ENCODE measurements at regions of chr1 and their contacts with region 1.

Region 1: DNA sequence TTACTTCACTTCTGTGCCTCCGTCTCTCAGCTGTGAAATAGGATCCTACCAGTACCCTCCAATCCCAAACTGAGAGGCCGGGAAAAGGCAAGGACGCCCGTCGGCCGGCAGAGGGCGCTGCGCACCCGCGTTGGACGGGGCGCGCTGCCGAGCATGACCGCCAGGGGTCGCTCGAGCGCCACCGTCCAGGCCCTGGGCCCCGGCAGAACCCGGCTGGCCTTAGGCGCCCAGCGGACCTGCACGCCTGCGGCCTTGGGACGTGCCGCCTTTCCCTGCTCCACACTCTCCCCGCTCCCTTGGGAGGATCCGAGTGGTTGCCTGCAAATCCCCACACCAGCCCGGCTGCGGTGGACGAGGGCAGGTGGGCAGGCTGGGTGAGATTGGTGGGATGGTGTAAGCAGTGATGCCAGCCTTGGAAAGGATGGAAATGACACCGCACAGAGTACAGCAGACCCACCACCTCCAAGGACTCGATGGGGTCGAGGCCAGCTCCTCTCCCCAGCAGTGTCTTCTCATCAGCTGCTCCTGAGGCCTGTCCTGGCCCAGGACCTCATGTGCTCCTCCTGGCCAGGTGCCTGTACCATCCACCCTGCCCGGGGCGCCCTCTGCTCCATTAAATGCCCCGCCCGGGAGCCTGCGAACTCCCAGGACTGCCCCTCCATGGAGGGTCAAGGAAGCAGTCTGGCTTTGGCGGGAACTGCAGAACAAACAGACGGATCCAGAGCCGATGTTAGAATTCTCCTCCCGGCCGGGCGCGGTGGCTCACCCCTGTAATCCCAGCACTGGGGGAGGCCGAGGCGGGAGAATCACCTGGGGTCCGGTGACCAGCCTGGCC is 47.4 kb upstream of the LBR start:
- DNase-seq: peak; percentile 77
- H3K4me3 Mint-ChIP-seq: no peak overlapping the region
- H3K27ac Mint-ChIP-seq: no peak overlapping the region
- H3K4me1 Mint-ChIP-seq: peaks cover 41% of the 10 kb centered on the region
- H3K27me3 Mint-ChIP-seq: no peaks in the 10 kb centered on the region

Region 2: DNA sequence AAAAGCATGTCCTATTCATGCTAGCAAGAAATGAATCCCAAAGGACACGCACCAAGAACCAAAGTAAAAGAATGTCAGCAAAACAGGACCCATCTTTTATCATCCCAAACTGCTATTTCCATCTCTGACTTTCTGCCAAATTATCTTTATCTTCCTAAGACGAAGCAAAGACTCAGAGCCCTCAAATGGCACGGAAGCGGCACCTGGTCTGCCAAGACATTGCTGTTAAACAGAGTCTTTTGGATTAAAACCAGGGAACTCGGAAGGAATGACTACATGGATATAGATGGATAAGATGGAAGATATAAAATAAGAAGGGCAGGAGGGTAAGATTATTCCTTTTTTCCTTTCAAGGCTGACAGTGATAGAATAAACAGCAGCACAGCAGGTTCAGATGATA is 13.5 kb after region 1 on chr1:
- CTCF ChIA-PET with region 1: interaction called, 14 read pairs
- POLR2A ChIA-PET with region 1: no interaction called
- intact Hi-C with region 1: no loop called
- DNase-seq: no peak
- H3K4me3 Mint-ChIP-seq: no peak overlapping the region
- H3K27ac Mint-ChIP-seq: no peak overlapping the region
- H3K4me1 Mint-ChIP-seq: no peaks in the 10 kb centered on the region
- H3K27me3 Mint-ChIP-seq: peaks cover 5% of the 10 kb centered on the region

Region 3: DNA sequence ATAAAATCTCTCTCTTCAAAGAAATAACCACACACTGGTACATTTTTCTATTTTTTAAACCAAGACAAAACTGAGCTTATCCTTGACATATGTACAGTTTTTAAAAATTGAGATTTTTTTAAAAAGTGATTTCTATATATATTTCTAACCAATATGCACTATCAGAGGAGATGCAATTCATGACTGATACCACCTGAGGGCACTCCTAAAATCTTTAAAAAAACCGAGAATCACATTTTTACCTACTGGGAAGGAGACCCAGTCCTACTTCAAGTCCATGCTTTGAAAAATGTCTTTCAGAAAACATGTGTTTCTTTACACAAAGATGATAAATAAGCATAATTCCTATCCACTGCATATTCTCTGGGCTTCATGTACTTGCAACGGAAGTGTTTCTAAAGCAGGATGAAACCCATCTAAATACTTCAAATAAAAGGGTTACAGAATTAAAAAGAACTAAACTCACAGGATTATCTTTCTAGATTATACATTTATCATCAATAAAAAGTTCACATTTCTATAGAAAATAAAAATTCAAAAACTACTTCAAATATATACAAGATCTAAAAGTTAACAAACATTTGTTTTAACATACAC is 79.1 kb after region 1 on chr1:
- CTCF ChIA-PET with region 1: interaction called, 11 read pairs
- POLR2A ChIA-PET with region 1: no interaction called
- intact Hi-C with region 1: loop called (anchors 5 kb)
- DNase-seq: no peak
- H3K4me3 Mint-ChIP-seq: no peak overlapping the region
- H3K27ac Mint-ChIP-seq: no peak overlapping the region
- H3K4me1 Mint-ChIP-seq: no peaks in the 10 kb centered on the region
- H3K27me3 Mint-ChIP-seq: peaks cover 3% of the 10 kb centered on the region

Region 4: GRCh38 chr1:225911191-225912130 is 436.3 kb after region 1 on chr1:
- CTCF ChIA-PET with region 1: interaction called, 14 read pairs
- POLR2A ChIA-PET with region 1: no interaction called
- intact Hi-C with region 1: loop called (anchors 1 kb)
- DNase-seq: peak; percentile 80
- H3K4me3 Mint-ChIP-seq: no peak overlapping the region
- H3K27ac Mint-ChIP-seq: no peak overlapping the region
- H3K4me1 Mint-ChIP-seq: peaks cover 20% of the 10 kb centered on the region
- H3K27me3 Mint-ChIP-seq: no peaks in the 10 kb centered on the region

Region 5: DNA sequence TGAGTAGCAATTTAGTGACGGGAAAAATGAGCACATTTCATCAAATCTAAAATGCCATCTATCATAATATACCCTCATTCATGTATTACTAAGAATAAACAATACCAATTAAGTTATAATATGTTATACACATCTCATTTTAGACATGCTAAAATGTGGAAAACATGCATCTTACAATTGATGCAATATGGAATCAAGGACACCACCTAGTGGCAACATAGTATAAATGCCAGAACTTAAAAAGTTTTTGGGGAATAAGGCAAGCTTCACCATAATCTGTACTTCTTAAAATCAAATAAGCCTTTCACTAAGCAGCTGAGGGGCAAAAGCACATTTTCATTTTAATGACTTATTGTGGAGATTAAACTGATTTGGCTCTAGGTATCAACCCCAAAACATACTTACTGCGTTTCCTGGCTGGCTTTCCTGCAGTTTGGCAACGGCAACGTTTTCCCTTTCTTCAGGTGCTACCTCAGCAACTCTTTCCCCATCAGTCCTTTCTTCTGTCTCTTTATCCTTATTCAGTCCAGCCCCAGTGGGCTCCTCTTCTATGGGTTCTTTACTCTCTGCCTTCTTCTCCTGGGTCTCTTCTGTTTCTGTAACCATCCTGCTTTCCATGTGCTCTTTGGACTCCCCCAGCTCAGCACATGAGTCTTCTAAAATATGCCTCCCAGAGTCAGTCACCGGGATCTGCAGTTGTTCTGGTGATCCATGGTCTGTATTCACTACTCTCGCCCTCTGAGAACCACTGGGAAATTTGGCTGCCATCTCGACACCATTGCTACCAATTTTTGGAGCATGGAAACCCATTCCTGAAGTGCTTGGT is 512.5 kb after region 1 on chr1:
- CTCF ChIA-PET with region 1: interaction called, 28 read pairs
- POLR2A ChIA-PET with region 1: no interaction called
- intact Hi-C with region 1: no loop called
- DNase-seq: no peak
- H3K4me3 Mint-ChIP-seq: no peak overlapping the region
- H3K27ac Mint-ChIP-seq: peak overlapping the region; percentile 19
- H3K4me1 Mint-ChIP-seq: peaks cover 29% of the 10 kb centered on the region
- H3K27me3 Mint-ChIP-seq: no peaks in the 10 kb centered on the region

Measured in activated CD4-positive, alpha-beta memory T cell treated with anti-CD3 and anti-CD28 coated beads for 36 hours (primary cell).